Caco-2 (cell line): ENCODE measurements at regions of chr12 and their contacts with region 1.

Region 1: DNA sequence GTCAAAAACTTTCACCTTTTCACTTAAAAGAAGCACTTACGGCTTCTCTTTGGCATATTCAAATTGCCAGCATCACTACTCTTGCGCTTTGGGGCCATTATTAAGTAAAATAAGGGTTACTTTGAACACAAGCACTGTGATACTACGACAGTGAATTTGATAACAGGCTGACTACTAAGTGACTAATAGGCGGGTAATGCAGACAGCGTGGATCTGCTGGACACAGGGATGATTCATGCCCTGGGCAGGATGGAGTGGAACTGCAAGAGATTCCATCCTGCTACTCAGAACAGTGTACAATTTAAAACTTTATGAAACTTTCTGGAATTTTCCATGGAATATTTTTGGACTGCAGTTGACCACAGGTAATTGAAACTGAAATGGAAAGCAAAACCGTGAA is 45.9 kb downstream of the YEATS4 start:
- DNase-seq: peak; percentile 46 to 66
- H3K4me3 ChIP-seq: no peak overlapping the region
- H3K4me3 Mint-ChIP-seq: no peak overlapping the region
- H3K27ac Mint-ChIP-seq: peak overlapping the region; percentile 62
- H3K4me1 ChIP-seq: peaks cover 18% of the 10 kb centered on the region
- H3K4me1 Mint-ChIP-seq: peaks cover 20% of the 10 kb centered on the region
- H3K27me3 ChIP-seq: no peaks in the 10 kb centered on the region
- H3K27me3 Mint-ChIP-seq: no peaks in the 10 kb centered on the region
- CTCF ChIP-seq: no peak

Region 2: GRCh38 chr12:69388371-69388770 is 17.1 kb before region 1 on chr12:
- CTCF ChIA-PET with region 1: no interaction called
- POLR2A ChIA-PET with region 1: interaction called, 3 read pairs
- intact Hi-C with region 1: loop called (anchors 1 kb)
- DNase-seq: peak in 1 of 2 experiments; percentile 50
- H3K4me3 ChIP-seq: no peak overlapping the region
- H3K4me3 Mint-ChIP-seq: no peak overlapping the region
- H3K27ac Mint-ChIP-seq: no peak overlapping the region
- H3K4me1 ChIP-seq: peaks cover 34% of the 10 kb centered on the region
- H3K4me1 Mint-ChIP-seq: peaks cover 15% of the 10 kb centered on the region
- H3K27me3 ChIP-seq: no peaks in the 10 kb centered on the region
- H3K27me3 Mint-ChIP-seq: no peaks in the 10 kb centered on the region
- CTCF ChIP-seq: peak; percentile 43 to 70